A673 (cell line): ENCODE measurements at regions of chr2 and their contacts with region 1.

Region 1: GRCh38 chr2:222120933-222121332 is 177.9 kb downstream of the PAX3 start:
- DNase-seq: peak; percentile 82
- H3K4me3 ChIP-seq: no peak overlapping the region
- H3K27ac ChIP-seq: no peak overlapping the region
- H3K4me1 ChIP-seq: peaks cover 46% of the 10 kb centered on the region
- H3K27me3 ChIP-seq: no peaks in the 10 kb centered on the region
- CTCF ChIP-seq: no peak

Region 2: GRCh38 chr2:222305516-222306392 is 184.8 kb after region 1 on chr2:
- CTCF ChIA-PET with region 1: no interaction called
- POLR2A ChIA-PET with region 1: no interaction called
- intact Hi-C with region 1: loop called (anchors 5 kb)
- DNase-seq: peak; percentile 72
- H3K4me3 ChIP-seq: peak overlapping the region; percentile 41
- H3K27ac ChIP-seq: peak overlapping the region; percentile 57
- H3K4me1 ChIP-seq: peaks cover 32% of the 10 kb centered on the region
- H3K27me3 ChIP-seq: no peaks in the 10 kb centered on the region
- CTCF ChIP-seq: no peak